ENCODE measurements at regions of chr11 and their contacts with region 1.

Region 1: DNA sequence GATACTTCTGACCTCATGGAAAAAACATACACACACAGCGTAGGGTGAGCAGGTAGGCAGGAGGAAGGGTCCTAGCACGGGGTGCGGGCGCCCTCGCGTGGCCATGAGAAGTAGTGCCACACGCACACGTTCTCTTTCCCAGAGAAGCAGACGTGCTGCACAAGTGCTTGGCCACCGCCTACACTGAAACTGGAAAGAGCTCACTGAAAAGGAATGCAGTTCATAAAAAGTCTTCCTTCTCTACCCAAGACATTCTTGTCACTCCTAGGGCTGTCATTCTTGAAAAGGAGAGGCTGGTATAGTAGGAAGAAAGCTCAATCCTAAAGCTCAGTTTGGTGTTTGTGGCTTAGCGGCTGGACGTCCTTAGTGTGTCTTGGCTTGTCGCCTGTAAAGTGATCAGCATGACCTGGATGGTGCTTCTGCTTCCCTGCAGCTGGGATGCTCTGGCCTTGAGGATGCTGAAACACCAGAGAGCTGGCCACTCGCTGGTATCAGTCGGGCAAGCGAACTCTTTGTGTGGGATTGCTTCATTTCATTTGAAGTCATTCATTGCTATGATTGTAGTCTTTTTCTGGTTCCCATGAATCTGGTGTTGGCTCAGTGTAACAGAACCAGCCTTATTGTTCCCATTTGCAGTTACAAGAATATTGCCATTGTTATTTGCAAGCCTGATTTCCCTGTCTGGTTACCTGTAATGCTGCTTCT is 303.8 kb downstream of the NTM start:
- DNase-seq: no peak
- H3K4me3 ChIP-seq: no peak overlapping the region
- H3K27ac ChIP-seq: no peak overlapping the region
- H3K4me1 ChIP-seq: no peaks in the 10 kb centered on the region
- H3K27me3 ChIP-seq: no peaks in the 10 kb centered on the region
- CTCF ChIP-seq: peak; percentile 99

Region 2: GRCh38 chr11:131064373-131064991 is 609.7 kb before region 1 on chr11:
- dilution Hi-C with region 1: loop called (anchors 25 kb)
- DNase-seq: no peak
- H3K4me3 ChIP-seq: no peak overlapping the region
- H3K27ac ChIP-seq: no peak overlapping the region
- H3K4me1 ChIP-seq: peaks cover 4% of the 10 kb centered on the region
- H3K27me3 ChIP-seq: no peaks in the 10 kb centered on the region
- CTCF ChIP-seq: peak; percentile 89 to 98 (median 93)

Region 3: GRCh38 chr11:131449036-131450019 is 224.9 kb before region 1 on chr11:
- dilution Hi-C with region 1: no loop called
- DNase-seq: no peak
- H3K4me3 ChIP-seq: no peak overlapping the region
- H3K27ac ChIP-seq: no peak overlapping the region
- H3K4me1 ChIP-seq: no peaks in the 10 kb centered on the region
- H3K27me3 ChIP-seq: no peaks in the 10 kb centered on the region
- CTCF ChIP-seq: no peak